ENCODE measurements at regions of chr1 and their contacts with region 1.

Region 1: GRCh38 chr1:172532700-172533509 is at the start of gene SUCO:
- DNase-seq: peak; percentile 100
- H3K4me3 ChIP-seq: peak within 1 kb of the TSS; percentile 48 to 92 (median 70)
- H3K27ac ChIP-seq: peak within 1 kb of the TSS; percentile 84
- H3K4me1 ChIP-seq: peaks cover 16% of the 10 kb centered on the region
- H3K27me3 ChIP-seq: peaks cover 7 to 15% of the 10 kb centered on the region in 2 experiments
- CTCF ChIP-seq: peak in 1 of 2 donors; percentile 22
- POLR2A ChIP-seq: peak; percentile 73
- total RNA-seq, gene SUCO: 26.6 and 27.2 TPM in 2 replicates

Region 2: DNA sequence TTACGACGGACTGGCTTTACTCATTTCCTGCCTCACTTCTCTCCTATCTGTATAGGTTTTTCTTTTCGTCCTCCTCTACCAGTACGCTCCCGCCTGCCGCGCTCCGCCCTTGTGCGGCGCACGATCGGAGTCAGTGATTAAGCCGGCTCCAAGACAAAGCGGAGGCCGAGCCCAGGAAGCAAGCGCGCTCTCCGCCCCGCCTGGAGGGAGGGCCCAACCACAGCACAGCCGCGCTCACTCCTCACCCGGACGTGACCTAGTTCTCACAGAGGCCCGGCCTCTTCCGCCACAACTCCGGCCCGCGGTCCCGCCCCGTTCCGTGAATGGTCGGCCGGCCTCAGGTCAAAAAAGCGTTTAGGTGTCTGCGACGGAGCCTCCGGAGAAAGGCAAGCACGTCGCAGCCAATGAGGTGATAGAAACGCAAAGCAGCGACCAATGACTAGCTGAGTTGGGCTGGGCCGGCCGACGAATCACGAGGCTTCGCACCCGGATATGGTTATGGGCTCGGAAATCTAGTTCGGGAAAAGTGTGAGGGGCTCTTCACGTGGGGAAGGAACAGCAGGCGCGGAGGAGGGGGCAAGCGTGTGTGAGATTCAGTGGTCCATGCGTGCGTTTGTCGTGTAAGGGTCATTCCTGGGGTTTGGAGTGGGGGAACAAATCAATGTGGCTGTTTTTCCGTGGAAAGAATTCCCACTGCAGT is 751.6 kb before region 1 on chr1 and contains the start of gene METTL13:
- CTCF ChIA-PET with region 1: no interaction called
- POLR2A ChIA-PET with region 1: no interaction called
- dilution Hi-C with region 1: no loop called
- intact Hi-C with region 1: loop called (anchors 2 kb)
- DNase-seq: peak; percentile 100
- H3K4me3 ChIP-seq: peak within 1 kb of the TSS; percentile 69 to 85 (median 81)
- H3K27ac ChIP-seq: peak within 1 kb of the TSS; percentile 66
- H3K4me1 ChIP-seq: peaks cover 7% of the 10 kb centered on the region
- H3K27me3 ChIP-seq: peaks cover 0 to 1% of the 10 kb centered on the region in 2 experiments
- CTCF ChIP-seq: no peak
- POLR2A ChIP-seq: peak; percentile 65
- total RNA-seq, gene METTL13: 26.5 and 29.7 TPM in 2 replicates

Region 3: DNA sequence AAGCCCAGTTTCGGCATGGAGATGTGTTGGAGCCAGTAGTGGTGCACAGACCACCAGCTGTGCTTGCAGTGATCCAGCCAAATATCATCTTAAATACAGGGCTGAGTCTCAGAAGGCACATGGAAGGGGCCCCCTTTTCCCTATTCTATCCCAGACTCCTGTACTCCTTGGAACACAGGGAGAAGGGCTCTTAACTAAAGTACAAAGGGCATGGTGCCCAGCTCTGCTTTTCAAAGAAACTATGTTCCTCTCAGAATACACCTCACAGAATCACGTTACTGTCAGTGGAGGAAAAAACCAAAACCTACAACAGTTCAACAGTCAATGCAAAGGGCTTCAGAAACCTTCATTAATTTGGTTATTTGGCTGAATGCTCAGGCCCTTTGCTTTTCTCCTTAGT is 293.0 kb before region 1 on chr1:
- CTCF ChIA-PET with region 1: no interaction called
- POLR2A ChIA-PET with region 1: no interaction called
- dilution Hi-C with region 1: no loop called
- intact Hi-C with region 1: no loop called
- DNase-seq: no peak
- H3K4me3 ChIP-seq: no peak overlapping the region
- H3K27ac ChIP-seq: no peak overlapping the region
- H3K4me1 ChIP-seq: no peaks in the 10 kb centered on the region
- H3K27me3 ChIP-seq: no peaks in the 10 kb centered on the region
- CTCF ChIP-seq: no peak
- POLR2A ChIP-seq: no peak

Region 4: GRCh38 chr1:172443626-172444453 is 89.1 kb before region 1 on chr1 and contains the start of gene PIGC:
- CTCF ChIA-PET with region 1: interaction called, 3 read pairs
- POLR2A ChIA-PET with region 1: no interaction called
- dilution Hi-C with region 1: no loop called
- intact Hi-C with region 1: loop called (anchors 1 kb)
- DNase-seq: peak; percentile 83
- H3K4me3 ChIP-seq: peak within 1 kb of the TSS; percentile 68 to 92 (median 83)
- H3K27ac ChIP-seq: peak within 1 kb of the TSS; percentile 76
- H3K4me1 ChIP-seq: peaks cover 16% of the 10 kb centered on the region
- H3K27me3 ChIP-seq: no peaks in the 10 kb centered on the region
- CTCF ChIP-seq: peak; percentile 90 to 93
- POLR2A ChIP-seq: peak; percentile 63
- total RNA-seq, gene PIGC: 15.9 and 16.1 TPM in 2 replicates

Region 5: DNA sequence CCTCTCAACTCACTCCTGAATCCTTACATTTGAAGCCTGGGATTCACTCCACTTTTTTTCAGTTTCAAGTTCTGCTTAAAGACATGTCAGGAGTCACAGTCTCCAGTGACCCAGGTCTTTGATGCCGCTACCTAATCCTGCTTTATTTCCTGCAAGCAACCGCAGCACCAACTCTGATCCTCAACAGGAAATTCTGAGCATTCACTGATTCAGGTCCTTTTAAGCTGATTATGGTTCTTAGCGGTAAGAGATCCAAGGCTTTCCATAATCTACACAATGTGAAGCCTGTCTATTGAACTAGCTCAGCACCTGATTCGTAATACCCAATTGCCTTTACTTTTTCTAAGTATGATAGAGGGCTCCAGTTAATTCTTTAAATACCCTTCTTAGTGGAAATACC is 45.4 kb before region 1 on chr1:
- CTCF ChIA-PET with region 1: no interaction called
- POLR2A ChIA-PET with region 1: no interaction called
- dilution Hi-C with region 1: no loop called
- intact Hi-C with region 1: no loop called
- DNase-seq: no peak
- H3K4me3 ChIP-seq: no peak overlapping the region
- H3K27ac ChIP-seq: no peak overlapping the region
- H3K4me1 ChIP-seq: no peaks in the 10 kb centered on the region
- H3K27me3 ChIP-seq: peaks cover 22 to 57% of the 10 kb centered on the region in 2 experiments
- CTCF ChIP-seq: no peak
- POLR2A ChIP-seq: no peak

Region 6: DNA sequence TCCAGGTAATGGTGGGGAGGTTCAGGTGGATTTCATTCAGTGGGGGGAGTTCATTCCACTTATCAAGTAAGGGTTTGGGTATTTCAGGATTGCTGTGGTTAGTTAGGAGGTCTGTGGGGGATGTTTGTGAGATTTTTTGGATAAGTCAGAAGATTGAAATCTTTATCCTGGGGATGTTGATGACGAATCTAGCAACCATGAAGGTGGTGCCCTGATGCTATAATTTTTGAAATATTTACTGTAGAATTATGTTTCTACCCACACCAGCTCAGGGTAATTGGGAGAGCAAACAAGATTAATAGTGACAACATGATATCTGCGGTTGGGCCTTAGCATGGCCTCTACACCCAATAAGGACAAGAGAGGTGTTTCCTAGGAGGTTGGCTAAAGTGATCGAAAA is 28.3 kb after region 1 on chr1:
- CTCF ChIA-PET with region 1: no interaction called
- POLR2A ChIA-PET with region 1: no interaction called
- dilution Hi-C with region 1: no loop called
- intact Hi-C with region 1: no loop called
- DNase-seq: no peak
- H3K4me3 ChIP-seq: no peak overlapping the region
- H3K27ac ChIP-seq: no peak overlapping the region
- H3K4me1 ChIP-seq: no peaks in the 10 kb centered on the region
- H3K27me3 ChIP-seq: no peaks in the 10 kb centered on the region
- CTCF ChIP-seq: no peak
- POLR2A ChIP-seq: no peak

Region 7: GRCh38 chr1:172588296-172589291 is 55.7 kb after region 1 on chr1:
- CTCF ChIA-PET with region 1: interaction called, 3 read pairs
- POLR2A ChIA-PET with region 1: interaction called, 4 read pairs
- dilution Hi-C with region 1: no loop called
- intact Hi-C with region 1: loop called (anchors 1 kb)
- DNase-seq: peak; percentile 90
- H3K4me3 ChIP-seq: peak overlapping the region in 2 of 3 experiments; percentile 30 to 58
- H3K27ac ChIP-seq: peak overlapping the region; percentile 83
- H3K4me1 ChIP-seq: peaks cover 43% of the 10 kb centered on the region
- H3K27me3 ChIP-seq: no peaks in the 10 kb centered on the region
- CTCF ChIP-seq: no peak
- POLR2A ChIP-seq: peak; percentile 25

Region 8: DNA sequence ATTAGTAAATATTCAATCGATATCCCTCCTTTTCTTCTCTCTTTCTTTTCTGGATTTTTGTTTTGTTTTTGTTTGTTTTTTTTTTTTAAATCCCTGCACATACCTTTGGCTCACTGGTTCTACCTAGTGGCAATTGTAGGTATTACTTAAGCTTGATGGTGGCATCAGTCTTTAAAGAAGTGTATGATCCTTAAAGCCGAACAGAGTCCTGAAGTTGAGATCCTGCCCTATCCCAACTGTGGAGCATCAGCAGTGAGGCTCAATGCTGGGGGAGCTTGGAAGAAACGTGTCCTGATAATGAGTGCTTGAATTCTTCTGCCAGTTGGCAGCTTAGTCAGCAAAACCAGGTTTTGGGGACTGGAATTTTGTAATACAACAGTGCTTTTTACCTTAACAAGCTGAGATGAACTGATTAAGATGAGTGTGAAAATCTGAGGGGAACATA is 186.8 kb after region 1 on chr1:
- CTCF ChIA-PET with region 1: interaction called, 20 read pairs
- POLR2A ChIA-PET with region 1: interaction called, 3 read pairs
- dilution Hi-C with region 1: no loop called
- intact Hi-C with region 1: loop called (anchors 1 kb)
- DNase-seq: peak; percentile 70
- H3K4me3 ChIP-seq: no peak overlapping the region
- H3K27ac ChIP-seq: no peak overlapping the region
- H3K4me1 ChIP-seq: no peaks in the 10 kb centered on the region
- H3K27me3 ChIP-seq: no peaks in the 10 kb centered on the region
- CTCF ChIP-seq: peak; percentile 53 to 64
- POLR2A ChIP-seq: no peak

Region 9: DNA sequence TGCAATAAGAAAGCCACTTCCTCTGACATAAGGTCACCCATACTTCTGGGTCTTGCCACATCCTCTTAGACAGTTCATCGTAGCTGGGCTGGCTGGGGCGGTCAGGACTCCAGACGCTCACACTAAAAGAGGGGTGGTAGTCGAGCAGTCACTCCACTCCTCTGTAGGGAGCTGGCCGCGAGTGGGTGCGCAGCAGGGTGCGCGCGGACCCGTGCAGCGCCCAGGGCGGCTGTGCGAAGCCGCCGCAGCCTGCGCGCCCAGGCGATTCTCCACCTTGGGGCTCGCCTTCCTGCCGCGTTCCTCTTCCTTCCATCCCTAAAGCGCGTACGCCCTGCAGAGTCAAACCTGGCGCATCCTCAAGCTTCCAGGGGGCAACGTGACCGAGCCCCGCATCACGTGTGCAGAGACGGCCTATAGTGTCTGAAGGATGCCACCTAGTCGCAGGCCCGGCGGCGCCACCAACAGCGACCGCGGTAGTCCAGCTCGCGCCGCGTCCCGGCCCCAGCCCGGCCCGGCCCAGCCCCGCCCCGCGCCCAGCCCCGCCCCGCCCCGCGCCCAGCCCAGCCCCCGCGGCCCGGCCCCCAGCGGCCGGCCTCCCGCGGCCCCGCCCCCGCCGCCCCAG is 943.9 kb after region 1 on chr1:
- CTCF ChIA-PET with region 1: no interaction called
- POLR2A ChIA-PET with region 1: no interaction called
- dilution Hi-C with region 1: no loop called
- intact Hi-C with region 1: loop called (anchors 2 kb)
- DNase-seq: peak; percentile 81
- H3K4me3 ChIP-seq: peak overlapping the region; percentile 63 to 78 (median 70)
- H3K27ac ChIP-seq: peak overlapping the region; percentile 79
- H3K4me1 ChIP-seq: peaks cover 53% of the 10 kb centered on the region
- H3K27me3 ChIP-seq: no peaks in the 10 kb centered on the region
- CTCF ChIP-seq: peak in 1 of 2 donors; percentile 3
- POLR2A ChIP-seq: peak; percentile 78